ENCODE measurements at regions of chr13 and their contacts with region 1.

Region 1: GRCh38 chr13:27374650-27375049 is 49.8 kb upstream of the GTF3A start:
- DNase-seq: no peak
- ATAC-seq: peak; percentile 96
- H3K4me3 ChIP-seq: no peak overlapping the region
- H3K27ac ChIP-seq: no peak overlapping the region
- H3K4me1 ChIP-seq: no peaks in the 10 kb centered on the region
- H3K27me3 ChIP-seq: no peaks in the 10 kb centered on the region
- CTCF ChIP-seq: peak; percentile 68 to 86 (median 80)
- EP300 ChIP-seq: no peak
- POLR2A ChIP-seq: no peak
- RAD21 ChIP-seq: peak; percentile 84

Region 2: DNA sequence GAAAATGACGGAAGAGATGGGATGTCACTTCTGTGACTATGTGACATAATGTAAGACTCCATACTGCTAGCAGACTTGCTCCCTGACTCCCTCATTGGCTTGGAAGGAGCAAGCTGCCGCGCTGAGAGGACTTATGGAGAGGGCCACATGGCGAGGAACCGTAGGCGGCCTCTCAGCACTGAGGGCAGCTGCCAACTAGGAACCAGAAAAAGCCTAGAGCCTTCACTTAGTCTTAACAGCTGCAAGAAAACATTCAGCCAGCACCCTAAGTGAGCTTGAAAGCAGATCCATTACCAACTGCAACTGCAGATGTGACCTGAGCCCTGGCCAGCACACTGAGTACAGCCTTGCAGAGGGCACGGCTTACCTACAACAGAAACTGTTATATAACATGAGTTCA is 236.9 kb before region 1 on chr13:
- CTCF ChIA-PET with region 1: no interaction called
- POLR2A ChIA-PET with region 1: no interaction called
- RAD21 ChIA-PET with region 1: no interaction called
- SMC1A ChIA-PET with region 1: no interaction called
- in situ Hi-C with region 1: no loop called
- intact Hi-C with region 1: no loop called
- DNase-seq: no peak
- ATAC-seq: peak; percentile 50
- H3K4me3 ChIP-seq: no peak overlapping the region
- H3K27ac ChIP-seq: no peak overlapping the region
- H3K4me1 ChIP-seq: peaks cover 4% of the 10 kb centered on the region
- H3K27me3 ChIP-seq: no peaks in the 10 kb centered on the region
- CTCF ChIP-seq: no peak
- EP300 ChIP-seq: no peak
- POLR2A ChIP-seq: no peak
- RAD21 ChIP-seq: no peak

Region 3: GRCh38 chr13:27533155-27533643 is 158.5 kb after region 1 on chr13:
- CTCF ChIA-PET with region 1: no interaction called
- POLR2A ChIA-PET with region 1: no interaction called
- RAD21 ChIA-PET with region 1: no interaction called
- SMC1A ChIA-PET with region 1: no interaction called
- in situ Hi-C with region 1: no loop called
- intact Hi-C with region 1: loop called (anchors 10 kb)
- DNase-seq: no peak
- ATAC-seq: peak; percentile 92
- H3K4me3 ChIP-seq: no peak overlapping the region
- H3K27ac ChIP-seq: no peak overlapping the region
- H3K4me1 ChIP-seq: no peaks in the 10 kb centered on the region
- H3K27me3 ChIP-seq: no peaks in the 10 kb centered on the region
- CTCF ChIP-seq: peak; percentile 69 to 87 (median 79)
- EP300 ChIP-seq: no peak
- POLR2A ChIP-seq: no peak
- RAD21 ChIP-seq: peak; percentile 58

Region 4: DNA sequence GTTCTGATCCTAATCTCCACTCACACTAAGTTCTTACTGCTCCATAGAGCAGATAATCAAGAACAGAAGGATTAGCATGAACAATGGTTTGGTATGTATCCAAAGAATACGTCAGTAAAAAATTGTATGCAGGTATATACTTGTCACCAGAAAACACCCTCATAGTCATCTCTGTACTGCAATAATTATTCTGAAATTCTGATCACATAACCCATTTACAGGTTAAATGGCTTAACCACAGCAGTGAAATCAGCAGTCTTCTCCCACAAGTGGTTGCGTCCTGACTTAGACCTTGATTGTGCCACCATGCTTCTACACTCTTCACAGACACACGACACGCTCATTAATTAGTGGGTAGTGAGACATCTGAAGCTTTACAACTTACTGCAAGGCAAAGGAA is 194.8 kb after region 1 on chr13:
- CTCF ChIA-PET with region 1: no interaction called
- POLR2A ChIA-PET with region 1: no interaction called
- RAD21 ChIA-PET with region 1: no interaction called
- SMC1A ChIA-PET with region 1: no interaction called
- in situ Hi-C with region 1: no loop called
- intact Hi-C with region 1: no loop called
- DNase-seq: peak; percentile 24
- ATAC-seq: peak; percentile 92
- H3K4me3 ChIP-seq: no peak overlapping the region
- H3K27ac ChIP-seq: no peak overlapping the region
- H3K4me1 ChIP-seq: no peaks in the 10 kb centered on the region
- H3K27me3 ChIP-seq: no peaks in the 10 kb centered on the region
- CTCF ChIP-seq: no peak
- EP300 ChIP-seq: peak in 1 of 2 experiments; percentile 44; a peak in 1 of 4 replicates
- POLR2A ChIP-seq: no peak
- RAD21 ChIP-seq: no peak